Activated T-helper 2 cell treated with anti-CD3 and anti-CD28 coated beads, Interferon-gamma antibody, Interleukin-2, Interleukin-4, amounts not matched to agents 10 μg/mL and 5 μg/mL and 100 μg/mL, durations not matched to agents 14 hours and 24 hours and 36 hours (primary cell): ENCODE measurements at regions of chrX and their contacts with region 1.

Region 1: GRCh38 chrX:46758906-46759644 is at the start of gene SLC9A7:
- DNase-seq: peak; percentile 76
- H3K4me3 Mint-ChIP-seq: peak within 1 kb of the TSS; percentile 98
- H3K27ac Mint-ChIP-seq: peak within 1 kb of the TSS; percentile 94
- H3K4me1 Mint-ChIP-seq: peaks cover 27% of the 10 kb centered on the region
- H3K27me3 Mint-ChIP-seq: no peaks in the 10 kb centered on the region
- total RNA-seq, gene SLC9A7: 42.5 and 44.2 TPM in 2 replicates

Region 2: DNA sequence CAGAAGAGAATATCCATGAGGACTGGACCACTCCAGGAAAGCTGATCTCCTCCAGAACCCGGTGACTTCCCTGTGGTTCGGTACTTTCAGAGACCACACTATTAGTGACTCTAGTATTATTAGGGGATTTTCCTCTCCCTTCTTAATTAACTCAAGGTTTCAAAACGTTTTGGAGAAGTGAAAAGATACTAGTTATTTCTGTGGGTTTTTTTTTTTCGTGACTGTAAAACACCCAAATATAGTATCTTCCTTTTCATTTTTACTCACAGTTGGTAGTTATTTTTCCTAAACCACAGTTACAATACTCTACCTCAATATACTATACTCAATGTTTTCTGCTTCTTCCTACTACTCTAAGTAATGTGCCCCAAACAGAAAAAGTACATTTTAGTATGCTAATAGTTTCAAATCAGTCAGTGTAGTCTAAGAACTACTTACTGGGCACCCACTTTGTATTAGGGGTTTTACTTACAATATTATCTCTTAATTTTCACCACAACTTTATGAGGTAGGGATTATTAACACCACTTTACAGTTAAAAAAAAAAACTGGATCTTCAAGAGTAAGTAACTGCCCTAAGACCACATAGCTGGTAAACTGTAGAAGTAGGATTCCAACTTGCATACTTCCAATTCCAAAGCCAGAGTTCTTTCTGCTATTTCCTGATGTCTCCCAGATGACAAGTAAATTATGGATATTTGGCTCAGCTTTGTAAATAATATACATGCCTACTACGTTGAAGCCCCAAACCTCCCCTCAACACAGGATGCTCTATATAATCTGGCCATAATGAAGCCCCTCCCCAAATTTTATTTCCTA is 45.2 kb before region 1 on chrX:
- intact Hi-C with region 1: loop called (anchors 2 kb)
- DNase-seq: no peak
- H3K4me3 Mint-ChIP-seq: peak overlapping the region; percentile 37
- H3K27ac Mint-ChIP-seq: peak overlapping the region; percentile 92
- H3K4me1 Mint-ChIP-seq: peaks cover 67% of the 10 kb centered on the region
- H3K27me3 Mint-ChIP-seq: no peaks in the 10 kb centered on the region